Sciatic nerve (tissue), 2 donors: ENCODE measurements at regions of chr9 and their contacts with region 1.

Region 1: GRCh38 chr9:129609486-129610192 is 11.3 kb downstream of the C9orf50 start:
- DNase-seq: no peak
- ATAC-seq: peak; percentile 14

Region 2: DNA sequence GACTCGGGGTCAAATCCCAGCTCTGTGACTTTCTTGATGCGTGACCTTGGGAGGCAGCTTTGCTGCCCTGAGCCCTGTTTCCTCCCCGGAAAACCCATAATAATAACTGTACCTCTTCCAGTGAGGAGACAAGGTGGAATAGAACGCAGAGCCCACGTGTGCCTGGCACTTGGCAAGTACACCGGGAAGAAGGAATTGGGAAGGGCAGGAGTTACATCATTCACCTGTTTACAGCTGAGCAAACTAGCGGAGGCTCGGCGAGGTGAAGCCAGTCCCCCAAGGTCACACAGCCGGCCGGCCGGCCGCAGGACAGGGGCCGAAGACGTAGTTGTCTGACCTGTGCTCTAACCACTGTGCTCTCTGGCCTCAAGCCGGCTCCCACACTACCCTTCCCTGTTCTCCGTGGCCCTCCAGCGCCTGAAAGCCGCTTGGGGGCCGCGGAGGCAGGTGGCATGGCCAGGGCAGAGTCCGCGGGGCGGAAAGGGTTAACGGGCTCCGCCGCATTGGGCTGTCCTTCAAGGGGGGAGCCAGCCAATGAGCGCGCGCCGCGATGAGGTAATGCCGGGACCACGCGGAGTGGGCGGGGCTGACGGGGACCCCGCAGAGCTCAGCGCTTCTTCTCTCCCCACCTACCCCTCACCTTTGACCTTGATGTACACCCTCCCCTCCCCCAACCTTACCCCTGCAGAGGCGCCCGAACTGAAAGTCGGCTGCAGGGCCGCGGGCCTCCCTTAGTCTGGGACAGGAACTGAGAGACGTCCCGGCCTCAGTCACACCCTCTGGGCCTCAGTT is 113.9 kb before region 1 on chr9:
- intact Hi-C with region 1: loop called (anchors 10 kb)
- DNase-seq: peak; percentile 98
- ATAC-seq: peak; percentile 87

Region 3: GRCh38 chr9:130090915-130091314 is 481.3 kb after region 1 on chr9:
- intact Hi-C with region 1: no loop called
- DNase-seq: no peak
- ATAC-seq: no peak